OCI-LY7 (cell line): ENCODE measurements at regions of chr9 and their contacts with region 1.

Region 1: GRCh38 chr9:95875305-95876137 is at the start of gene ERCC6L2:
- DNase-seq: peak; percentile 97
- H3K4me3 ChIP-seq: no peak within 1 kb of the TSS
- H3K27ac ChIP-seq: no peak within 1 kb of the TSS
- H3K4me1 ChIP-seq: peaks cover 8% of the 10 kb centered on the region
- CTCF ChIP-seq: no peak
- total RNA-seq, gene ERCC6L2: 34.9 and 41.0 TPM in 2 replicates

Region 2: DNA sequence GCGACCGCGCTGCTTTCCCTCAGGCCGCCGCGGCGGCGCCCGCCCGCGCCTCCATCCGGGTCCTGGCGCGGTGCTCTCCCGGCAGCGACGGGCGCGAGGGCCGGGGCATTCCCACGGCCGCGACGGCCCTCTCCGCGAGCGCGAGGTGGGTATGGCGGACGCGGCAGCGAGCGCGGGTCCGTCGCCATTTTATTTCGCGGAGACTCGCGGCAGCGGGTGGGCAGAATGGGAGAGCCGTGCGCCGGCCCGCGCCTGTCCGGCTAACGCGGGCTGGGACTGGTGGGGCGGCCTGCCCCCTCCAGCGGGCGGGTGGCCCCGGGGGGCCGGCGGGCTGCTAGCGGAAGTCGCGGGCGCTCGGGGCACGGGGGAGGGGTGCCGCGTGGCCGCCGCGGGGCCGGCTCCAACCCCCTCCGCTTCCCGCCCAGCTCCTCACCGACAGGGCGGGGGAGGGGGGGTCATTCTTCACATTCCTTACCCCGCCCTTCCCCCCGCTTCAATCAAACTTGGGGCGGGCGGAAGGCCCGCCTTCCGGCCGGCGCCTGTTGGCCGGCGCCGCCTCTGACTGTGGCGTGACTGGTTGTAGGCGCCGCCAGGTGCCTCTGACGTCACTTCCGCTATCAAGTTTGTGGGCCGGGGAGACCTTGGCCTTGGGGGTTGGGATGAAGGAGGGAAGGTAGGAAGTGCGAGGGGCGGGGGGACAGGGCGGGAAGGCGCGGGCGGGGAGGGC is 1709.1 kb before region 1 on chr9:
- CTCF ChIA-PET with region 1: no interaction called
- POLR2A ChIA-PET with region 1: no interaction called
- intact Hi-C with region 1: loop called (anchors 5 kb)
- DNase-seq: peak; percentile 99
- H3K4me3 ChIP-seq: peak overlapping the region; percentile 83
- H3K27ac ChIP-seq: peak overlapping the region; percentile 87
- H3K4me1 ChIP-seq: peaks cover 41% of the 10 kb centered on the region
- CTCF ChIP-seq: 0 out of 2 replicates have a peak, but pooled peaks have one; percentile 13

Region 3: GRCh38 chr9:94663140-94663539 is 1212.4 kb before region 1 on chr9:
- CTCF ChIA-PET with region 1: no interaction called
- POLR2A ChIA-PET with region 1: no interaction called
- intact Hi-C with region 1: loop called (anchors 5 kb)
- DNase-seq: no peak
- H3K4me3 ChIP-seq: no peak overlapping the region
- H3K27ac ChIP-seq: no peak overlapping the region
- H3K4me1 ChIP-seq: no peaks in the 10 kb centered on the region
- CTCF ChIP-seq: no peak

Region 4: DNA sequence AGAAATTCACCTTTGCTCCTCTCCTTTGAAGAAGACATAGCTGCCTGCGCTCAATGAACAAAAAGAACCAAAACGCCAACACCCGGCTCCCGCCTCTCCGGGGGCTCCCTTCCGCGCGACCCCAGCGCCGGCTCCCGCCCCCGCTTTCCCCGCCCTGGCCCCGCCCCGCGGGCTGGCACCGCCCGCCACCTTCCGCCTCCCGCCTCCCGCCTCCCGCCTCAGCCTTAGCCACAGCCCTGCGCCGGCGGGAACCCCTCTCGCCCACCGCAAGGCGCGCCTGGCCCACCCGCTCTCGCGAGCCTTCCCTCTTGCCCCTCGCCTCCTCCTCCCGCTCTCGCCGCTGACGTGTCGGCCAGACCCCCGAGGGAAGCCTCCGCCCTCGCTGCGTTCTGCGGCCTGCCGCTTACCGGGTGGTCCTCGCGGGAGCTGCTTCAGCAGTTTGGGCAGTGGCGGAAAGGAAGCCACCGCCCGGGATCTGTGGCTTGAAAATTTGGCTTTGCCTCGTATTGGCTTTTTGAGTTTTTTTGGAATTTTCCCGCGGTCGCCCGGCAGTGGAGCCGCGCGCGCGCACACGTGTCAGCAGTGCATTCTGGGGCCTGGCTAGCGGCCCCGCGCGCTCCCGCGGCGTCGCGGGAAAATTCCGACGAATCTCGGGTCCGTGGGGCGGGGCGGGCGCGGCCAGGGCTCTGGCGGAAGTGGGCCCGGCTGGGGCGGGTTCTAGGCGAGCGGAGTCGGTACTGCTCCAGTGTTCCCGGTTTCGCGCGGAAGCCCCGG is 558.2 kb before region 1 on chr9 and contains the start of gene FANCC:
- CTCF ChIA-PET with region 1: no interaction called
- POLR2A ChIA-PET with region 1: no interaction called
- intact Hi-C with region 1: loop called (anchors 2 kb)
- DNase-seq: peak; percentile 91
- H3K4me3 ChIP-seq: peak within 1 kb of the TSS; percentile 79
- H3K27ac ChIP-seq: peak within 1 kb of the TSS; percentile 84
- H3K4me1 ChIP-seq: peaks cover 14% of the 10 kb centered on the region
- CTCF ChIP-seq: 0 out of 2 replicates have a peak, but pooled peaks have one; percentile 24
- total RNA-seq, gene FANCC: 12.3 and 13.9 TPM in 2 replicates

Region 5: GRCh38 chr9:96169484-96169883 is 294.0 kb after region 1 on chr9:
- CTCF ChIA-PET with region 1: no interaction called
- POLR2A ChIA-PET with region 1: no interaction called
- intact Hi-C with region 1: no loop called
- DNase-seq: no peak
- H3K4me3 ChIP-seq: no peak overlapping the region
- H3K27ac ChIP-seq: no peak overlapping the region
- H3K4me1 ChIP-seq: no peaks in the 10 kb centered on the region
- CTCF ChIP-seq: no peak